Vagina (tissue), 2 donors: ENCODE measurements at regions of chr5 and their contacts with region 1.

Region 1: GRCh38 chr5:139524932-139525585 is 36.1 kb upstream of the UBE2D2 start:
- DNase-seq: no peak
- H3K4me3 ChIP-seq: no peak overlapping the region
- H3K27ac ChIP-seq: no peak overlapping the region
- H3K4me1 ChIP-seq: peaks cover 3% of the 10 kb centered on the region
- H3K27me3 ChIP-seq: no peaks in the 10 kb centered on the region
- CTCF ChIP-seq: no peak
- POLR2A ChIP-seq: no peak

Region 2: GRCh38 chr5:139468421-139468931 is 56.6 kb before region 1 on chr5:
- intact Hi-C with region 1: loop called (anchors 2 kb)
- DNase-seq: no peak
- H3K4me3 ChIP-seq: no peak overlapping the region
- H3K27ac ChIP-seq: no peak overlapping the region
- H3K4me1 ChIP-seq: peaks cover 12% of the 10 kb centered on the region
- H3K27me3 ChIP-seq: no peaks in the 10 kb centered on the region
- CTCF ChIP-seq: no peak
- POLR2A ChIP-seq: no peak

Region 3: DNA sequence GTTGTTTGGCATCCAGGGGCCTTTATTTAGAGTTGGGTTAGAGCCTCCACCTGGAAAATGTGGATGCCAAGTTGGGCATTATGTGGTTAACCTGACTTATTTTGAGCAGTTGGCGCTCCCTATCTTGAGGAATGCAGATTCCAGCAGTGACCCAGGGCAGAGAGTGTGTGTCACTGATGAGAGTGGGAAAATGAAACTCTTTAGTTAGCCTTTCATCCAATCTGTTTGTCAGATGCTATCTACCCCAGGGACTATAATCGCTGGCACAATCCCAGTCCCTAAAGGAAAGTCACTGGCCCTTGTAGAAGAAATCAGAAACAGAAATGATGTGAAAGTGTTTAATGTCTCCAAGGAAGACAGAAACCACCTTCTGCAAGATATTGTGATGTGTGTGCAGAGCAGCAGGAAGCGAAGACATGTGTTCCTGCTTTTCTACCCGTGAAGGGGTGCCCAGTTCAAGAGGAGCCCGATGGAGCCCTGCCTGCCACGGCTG is 32.3 kb before region 1 on chr5:
- intact Hi-C with region 1: no loop called
- DNase-seq: no peak
- H3K4me3 ChIP-seq: no peak overlapping the region
- H3K27ac ChIP-seq: no peak overlapping the region
- H3K4me1 ChIP-seq: peaks cover 21% of the 10 kb centered on the region
- H3K27me3 ChIP-seq: no peaks in the 10 kb centered on the region
- CTCF ChIP-seq: no peak
- POLR2A ChIP-seq: no peak